Activated naive CD8-positive, alpha-beta T cell treated with anti-CD3 and anti-CD28 coated beads, Interleukin-2, amount 10 ng/mL, durations not matched to agents 7 days and 5 days (primary cell): ENCODE measurements at regions of chr17 and their contacts with region 1.

Region 1: DNA sequence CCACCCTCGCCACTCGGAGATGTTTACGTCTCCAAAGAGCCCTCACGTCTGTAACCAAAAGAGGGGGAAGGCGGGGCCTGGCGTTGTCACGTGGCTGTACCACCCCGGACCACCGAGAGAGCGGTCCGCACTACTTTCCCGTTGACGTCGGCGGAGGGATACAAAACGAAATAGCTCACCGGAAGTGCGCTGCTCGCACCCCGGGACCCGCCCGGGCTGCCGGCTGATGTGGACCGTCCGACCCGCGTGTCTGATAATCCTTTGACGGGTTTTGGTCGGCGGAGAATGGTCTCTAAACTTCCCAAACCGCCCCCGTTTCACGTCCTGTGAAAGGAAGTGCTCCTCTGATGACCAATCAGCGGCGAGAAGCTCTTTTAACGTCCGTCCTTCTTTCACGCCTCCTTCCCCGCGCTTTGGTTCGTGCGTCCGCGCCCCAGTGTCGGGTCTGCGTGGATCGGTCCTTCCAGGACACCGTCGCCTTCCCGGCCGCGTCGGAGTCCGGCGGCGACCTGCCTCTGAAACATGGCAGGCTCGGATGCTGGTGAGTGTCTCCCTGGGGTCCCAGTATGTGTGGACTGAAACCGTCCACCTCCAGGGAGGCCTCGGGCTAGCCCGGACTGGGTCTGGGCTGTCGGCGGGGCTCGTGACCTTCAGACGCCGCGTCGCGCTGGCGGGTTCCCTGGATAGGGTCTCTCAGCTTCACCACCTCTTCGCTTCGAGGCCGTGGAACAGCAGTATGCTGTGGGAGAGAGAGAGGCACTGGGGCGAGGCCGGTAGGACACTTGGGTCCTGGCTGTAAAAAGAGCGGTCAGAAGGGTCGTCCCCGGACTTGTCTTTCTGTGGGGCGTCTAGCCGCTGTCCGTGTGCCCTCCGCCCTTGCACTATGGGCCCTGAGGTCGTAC is at the start of gene CEP95:
- DNase-seq: peak; percentile 94
- ATAC-seq: peak; percentile 67
- H3K4me3 Mint-ChIP-seq: peak within 1 kb of the TSS; percentile 98
- H3K27ac Mint-ChIP-seq: peak within 1 kb of the TSS; percentile 100
- H3K4me1 Mint-ChIP-seq: peaks cover 42% of the 10 kb centered on the region
- H3K27me3 Mint-ChIP-seq: no peaks in the 10 kb centered on the region
- total RNA-seq, gene CEP95: 71.0 to 71.7 TPM

Region 2: DNA sequence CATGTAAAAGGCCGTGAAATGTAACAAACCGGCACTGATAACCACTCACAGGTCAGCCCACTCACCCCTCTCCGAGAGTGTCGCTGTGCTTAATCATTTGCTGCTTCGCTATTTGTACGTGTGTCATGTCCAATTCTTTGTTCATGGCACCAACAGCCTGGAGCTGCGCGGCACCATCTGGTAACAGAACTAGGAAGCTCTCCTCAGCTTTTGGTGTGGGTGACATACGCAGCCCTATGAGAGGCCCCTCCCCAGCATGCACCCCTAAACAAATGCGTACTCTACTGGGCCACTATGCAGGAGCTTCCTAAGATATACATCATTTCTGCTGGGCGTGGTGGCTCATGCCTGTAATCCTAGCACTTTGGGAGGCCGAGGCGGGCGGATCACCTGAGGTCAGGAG is 113.8 kb before region 1 on chr17:
- POLR2A ChIA-PET with region 1: interaction called, 40 read pairs
- DNase-seq: peak; percentile 57
- ATAC-seq: peak; percentile 56
- H3K4me3 Mint-ChIP-seq: peak overlapping the region; percentile 87
- H3K27ac Mint-ChIP-seq: peak overlapping the region; percentile 92
- H3K4me1 Mint-ChIP-seq: peaks cover 60% of the 10 kb centered on the region
- H3K27me3 Mint-ChIP-seq: no peaks in the 10 kb centered on the region

Region 3: GRCh38 chr17:64411999-64412771 is 94.6 kb before region 1 on chr17:
- POLR2A ChIA-PET with region 1: interaction called, 16 read pairs
- DNase-seq: no peak
- ATAC-seq: peak; percentile 33
- H3K4me3 Mint-ChIP-seq: peak overlapping the region; percentile 72
- H3K27ac Mint-ChIP-seq: peak overlapping the region; percentile 74
- H3K4me1 Mint-ChIP-seq: peaks cover 25% of the 10 kb centered on the region
- H3K27me3 Mint-ChIP-seq: no peaks in the 10 kb centered on the region

Region 4: DNA sequence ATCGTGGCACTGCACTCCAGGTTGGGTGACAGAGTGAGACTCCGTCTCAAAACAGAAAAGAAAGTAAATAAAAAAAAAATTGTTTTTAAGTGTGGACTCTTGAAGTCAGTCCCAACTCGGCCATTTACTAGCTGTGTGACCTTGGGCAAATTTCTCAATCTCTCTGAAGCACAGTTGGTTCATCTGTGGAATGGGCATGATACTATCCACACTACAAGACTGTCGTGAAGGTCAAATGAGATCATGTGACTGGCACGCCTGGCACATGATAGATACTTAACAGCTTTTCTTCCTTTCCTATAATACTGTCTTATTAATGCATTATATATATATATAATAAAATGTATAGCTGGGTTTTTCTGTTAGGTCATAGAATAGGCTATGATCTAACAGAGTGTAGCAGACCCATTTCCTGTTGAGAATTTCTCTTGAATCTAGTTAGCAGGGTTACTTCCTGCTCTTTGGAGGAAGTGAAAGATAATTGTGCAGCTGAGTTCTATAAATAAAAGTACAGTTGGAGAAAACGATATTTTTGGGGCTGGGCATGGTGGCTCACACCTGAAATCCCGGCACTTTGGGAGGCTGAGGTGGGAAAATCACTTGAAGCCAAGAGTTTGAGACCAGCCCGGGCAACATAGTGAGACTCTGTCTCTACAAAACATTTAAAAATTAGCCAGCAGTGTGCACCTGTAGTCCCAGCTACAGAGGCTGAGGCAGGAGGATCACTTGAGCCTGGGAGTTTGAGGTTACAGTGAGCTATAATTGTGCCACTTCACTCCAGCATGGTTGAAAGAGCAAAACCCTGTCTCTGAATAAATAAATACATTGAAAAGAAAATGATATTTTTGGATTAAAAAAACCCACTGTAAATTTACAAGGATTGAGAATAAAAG is 50.6 kb before region 1 on chr17:
- POLR2A ChIA-PET with region 1: interaction called, 12 read pairs
- DNase-seq: no peak
- ATAC-seq: peak; percentile 84
- H3K4me3 Mint-ChIP-seq: peak overlapping the region; percentile 37
- H3K27ac Mint-ChIP-seq: peak overlapping the region; percentile 93
- H3K4me1 Mint-ChIP-seq: peaks cover 18% of the 10 kb centered on the region
- H3K27me3 Mint-ChIP-seq: no peaks in the 10 kb centered on the region

Region 5: GRCh38 chr17:64470625-64471024 is 36.2 kb before region 1 on chr17:
- POLR2A ChIA-PET with region 1: no interaction called
- DNase-seq: no peak
- ATAC-seq: no peak
- H3K4me3 Mint-ChIP-seq: no peak overlapping the region
- H3K27ac Mint-ChIP-seq: no peak overlapping the region
- H3K4me1 Mint-ChIP-seq: no peaks in the 10 kb centered on the region
- H3K27me3 Mint-ChIP-seq: peaks cover 12% of the 10 kb centered on the region

Region 6: GRCh38 chr17:64538508-64539130 is 31.8 kb after region 1 on chr17:
- POLR2A ChIA-PET with region 1: interaction called, 12 read pairs
- DNase-seq: no peak
- ATAC-seq: no peak
- H3K4me3 Mint-ChIP-seq: no peak overlapping the region
- H3K27ac Mint-ChIP-seq: peak overlapping the region; percentile 31
- H3K4me1 Mint-ChIP-seq: peaks cover 2% of the 10 kb centered on the region
- H3K27me3 Mint-ChIP-seq: no peaks in the 10 kb centered on the region

Region 7: GRCh38 chr17:64653325-64653984 is 146.6 kb after region 1 on chr17:
- POLR2A ChIA-PET with region 1: interaction called, 10 read pairs
- DNase-seq: no peak
- ATAC-seq: no peak
- H3K4me3 Mint-ChIP-seq: no peak overlapping the region
- H3K27ac Mint-ChIP-seq: no peak overlapping the region
- H3K4me1 Mint-ChIP-seq: peaks cover 29% of the 10 kb centered on the region
- H3K27me3 Mint-ChIP-seq: no peaks in the 10 kb centered on the region

Region 8: DNA sequence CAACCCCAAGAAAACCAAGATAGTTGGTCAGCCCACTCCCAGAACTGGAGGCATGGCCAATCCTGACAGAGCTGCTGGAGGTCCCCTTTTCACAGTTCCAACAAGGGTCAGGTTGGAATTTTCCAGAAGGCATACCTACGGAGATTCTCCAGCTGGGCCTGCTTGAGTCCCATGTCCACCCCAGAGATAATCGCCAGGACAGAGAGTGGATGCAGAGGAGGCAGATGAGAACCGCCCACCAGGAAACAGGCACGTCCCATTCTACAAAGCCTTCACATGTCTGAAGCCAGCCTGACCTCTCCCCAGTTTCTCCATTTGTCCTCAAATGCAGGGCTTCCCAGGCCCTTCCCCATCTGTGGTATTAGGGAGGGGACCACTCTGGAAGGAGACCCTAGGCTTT is 202.7 kb after region 1 on chr17:
- POLR2A ChIA-PET with region 1: interaction called, 13 read pairs
- DNase-seq: no peak
- ATAC-seq: no peak
- H3K4me3 Mint-ChIP-seq: peak overlapping the region; percentile 65
- H3K27ac Mint-ChIP-seq: peak overlapping the region; percentile 78
- H3K4me1 Mint-ChIP-seq: peaks cover 68% of the 10 kb centered on the region
- H3K27me3 Mint-ChIP-seq: no peaks in the 10 kb centered on the region